Heart right ventricle (tissue), 16 donors: ENCODE measurements at regions of chr4 and their contacts with region 1.

Region 1: GRCh38 chr4:1222036-1222789 is 26.7 kb downstream of the CTBP1 start:
- DNase-seq: no peak
- ATAC-seq: no peak
- H3K4me3 ChIP-seq: no peak overlapping the region
- H3K27ac ChIP-seq: no peak overlapping the region
- H3K4me1 ChIP-seq: peaks cover 13 to 39% (median 25%) of the 10 kb centered on the region in 9 donors
- H3K27me3 ChIP-seq: no peaks in the 10 kb centered on the region
- CTCF ChIP-seq: no peak

Region 2: GRCh38 chr4:1177274-1178141 is 44.7 kb before region 1 on chr4:
- intact Hi-C with region 1: loop called in 1 of 10 experiments (anchors 5 kb)
- DNase-seq: peak; percentile 48 to 63
- ATAC-seq: peak; percentile 35 to 86 (median 72)
- H3K4me3 ChIP-seq: no peak overlapping the region
- H3K27ac ChIP-seq: peak overlapping the region; percentile 59 to 87 (median 76)
- H3K4me1 ChIP-seq: peaks cover 7 to 37% (median 21%) of the 10 kb centered on the region in 9 donors
- H3K27me3 ChIP-seq: peaks cover 0 to 14% (median under 1%) of the 10 kb centered on the region in 7 donors
- CTCF ChIP-seq: no peak

Region 3: DNA sequence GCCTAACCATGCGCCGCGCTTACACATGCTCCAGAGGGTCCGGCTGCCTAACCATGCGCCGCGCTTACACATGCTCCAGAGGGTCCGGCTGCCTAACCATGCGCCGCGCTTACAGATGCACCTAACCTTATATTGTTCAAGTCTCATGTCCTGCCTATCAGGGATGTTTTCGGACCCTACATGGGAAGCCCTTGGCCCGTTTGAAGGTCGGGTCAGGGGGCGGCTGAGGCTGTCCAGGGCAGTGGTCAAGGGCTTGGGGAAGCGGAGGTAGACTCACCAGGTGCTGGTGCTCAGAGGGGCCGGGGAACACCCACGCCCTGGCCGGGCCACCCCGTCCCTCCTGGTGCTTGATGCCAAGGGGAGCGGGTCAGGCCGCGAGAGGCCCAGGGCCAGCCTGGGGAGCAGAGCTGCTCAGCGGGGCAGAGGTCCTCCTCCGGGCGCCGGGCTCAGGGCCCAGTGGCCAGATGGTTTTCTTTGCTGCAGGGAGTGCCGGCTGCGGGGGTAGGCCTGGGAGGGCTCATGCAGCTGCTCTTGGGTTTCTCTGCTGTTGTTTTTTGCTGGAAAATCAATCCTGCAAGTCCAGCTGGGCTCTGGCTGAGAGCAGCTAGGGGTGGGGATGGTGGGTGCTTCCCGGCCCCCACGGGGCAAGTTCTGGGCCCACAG is 14.5 kb before region 1 on chr4:
- intact Hi-C with region 1: loop called in 1 of 10 experiments (anchors 1 kb)
- DNase-seq: peak in 1 of 2 donors; percentile 75
- ATAC-seq: peak; percentile 12 to 59 (median 37)
- H3K4me3 ChIP-seq: peak overlapping the region in 5 of 10 donors; percentile 2 to 28 (median 11)
- H3K27ac ChIP-seq: peak overlapping the region; percentile 57 to 81 (median 70)
- H3K4me1 ChIP-seq: peaks cover 26 to 56% (median 49%) of the 10 kb centered on the region in 9 donors
- H3K27me3 ChIP-seq: no peaks in the 10 kb centered on the region
- CTCF ChIP-seq: no peak

Region 4: DNA sequence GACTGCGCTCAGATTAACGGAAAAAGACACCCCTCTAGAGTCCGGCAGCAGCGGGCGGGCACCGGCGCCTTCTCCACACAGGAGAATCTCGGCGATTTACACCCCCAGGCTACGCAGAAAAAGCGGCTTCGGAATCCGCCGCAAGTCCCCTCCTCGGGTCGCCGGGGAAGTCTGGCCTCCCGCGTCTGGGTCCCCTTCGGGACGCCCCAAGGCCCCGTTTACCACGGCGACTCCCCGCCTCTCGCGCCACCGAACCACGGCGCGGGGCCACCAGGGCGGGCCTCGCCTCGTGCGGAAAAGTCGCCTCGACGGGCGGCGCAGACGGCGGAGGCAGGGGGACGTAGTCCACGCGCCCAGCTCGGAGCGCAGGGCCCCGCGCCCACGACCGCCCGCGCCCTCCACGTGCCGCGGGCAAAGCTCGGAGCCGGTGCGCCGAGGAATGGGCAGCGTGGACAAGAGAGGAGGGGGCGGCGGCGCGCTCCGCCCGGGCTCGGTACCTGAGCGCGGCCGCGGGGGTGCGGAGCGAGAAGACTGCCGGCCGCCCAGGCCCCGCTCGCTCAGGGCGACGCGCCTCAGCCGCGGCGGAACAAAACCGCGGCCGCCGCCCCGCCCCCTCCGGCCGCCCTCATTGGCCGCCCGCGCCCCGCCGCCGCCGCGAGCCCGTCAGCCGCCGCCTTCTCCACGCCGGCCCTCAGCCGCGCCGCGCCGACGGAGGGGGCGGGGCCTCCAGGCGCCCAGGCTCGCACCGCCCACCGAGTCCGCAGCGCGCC is 461.7 kb after region 1 on chr4 and contains the start of gene FAM53A:
- intact Hi-C with region 1: no loop called
- DNase-seq: peak; percentile 89 to 96
- ATAC-seq: peak; percentile 91 to 98 (median 94)
- H3K4me3 ChIP-seq: peak within 1 kb of the TSS; percentile 12 to 72 (median 66)
- H3K27ac ChIP-seq: peak within 1 kb of the TSS; percentile 15 to 83 (median 64)
- H3K4me1 ChIP-seq: peaks cover 0 to 18% (median 8%) of the 10 kb centered on the region in 9 donors
- H3K27me3 ChIP-seq: no peaks in the 10 kb centered on the region
- CTCF ChIP-seq: peak in 2 of 9 donors; percentile 7
- total RNA-seq, gene FAM53A: 0.24 to 1.5 (median 0.70) TPM